ENCODE measurements at regions of chr11 and their contacts with region 1.

Region 1: GRCh38 chr11:30855383-30856006 is 269.3 kb upstream of the MPPED2 start:
- DNase-seq: no peak
- H3K4me3 ChIP-seq: peak overlapping the region in 2 of 59 donors; percentile 14 to 28
- H3K27ac ChIP-seq: no peak overlapping the region
- H3K27me3 ChIP-seq: peaks cover 0 to 8% (median 0%) of the 10 kb centered on the region in 45 donors
- CTCF ChIP-seq: peak in 55 of 56 donors; percentile 40 to 81 (median 58)

Region 2: GRCh38 chr11:30346068-30346688 is 509.3 kb before region 1 on chr11:
- intact Hi-C with region 1: loop called (anchors 5 kb)
- DNase-seq: no peak
- H3K4me3 ChIP-seq: no peak overlapping the region
- H3K27ac ChIP-seq: no peak overlapping the region
- H3K27me3 ChIP-seq: no peaks in the 10 kb centered on the region
- CTCF ChIP-seq: peak; percentile 56 to 86 (median 74)

Region 3: DNA sequence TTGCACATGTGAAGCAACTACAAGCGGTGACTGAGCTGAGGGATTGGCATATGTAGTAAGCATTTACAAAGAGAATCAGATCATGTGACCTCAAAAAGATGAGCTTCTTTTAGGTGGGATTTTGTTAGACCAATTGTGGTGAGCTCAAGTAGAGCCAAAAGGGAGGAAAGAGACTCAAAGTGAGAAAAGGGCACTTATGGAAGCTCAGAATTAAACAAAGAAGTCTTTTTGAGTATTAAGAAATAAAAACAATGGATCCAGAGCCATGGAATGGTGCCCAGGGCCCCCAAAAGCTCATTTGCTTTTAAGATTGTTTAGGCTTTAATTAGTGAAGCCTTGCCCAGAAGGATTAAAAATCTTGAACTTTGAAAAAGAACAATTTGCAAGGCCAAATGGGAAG is 22.7 kb before region 1 on chr11:
- intact Hi-C with region 1: no loop called
- DNase-seq: no peak
- H3K4me3 ChIP-seq: no peak overlapping the region
- H3K27ac ChIP-seq: no peak overlapping the region
- H3K27me3 ChIP-seq: peaks cover 0 to 7% (median 0%) of the 10 kb centered on the region in 45 donors
- CTCF ChIP-seq: no peak